ENCODE measurements at regions of chrX and their contacts with region 1.

Region 1: DNA sequence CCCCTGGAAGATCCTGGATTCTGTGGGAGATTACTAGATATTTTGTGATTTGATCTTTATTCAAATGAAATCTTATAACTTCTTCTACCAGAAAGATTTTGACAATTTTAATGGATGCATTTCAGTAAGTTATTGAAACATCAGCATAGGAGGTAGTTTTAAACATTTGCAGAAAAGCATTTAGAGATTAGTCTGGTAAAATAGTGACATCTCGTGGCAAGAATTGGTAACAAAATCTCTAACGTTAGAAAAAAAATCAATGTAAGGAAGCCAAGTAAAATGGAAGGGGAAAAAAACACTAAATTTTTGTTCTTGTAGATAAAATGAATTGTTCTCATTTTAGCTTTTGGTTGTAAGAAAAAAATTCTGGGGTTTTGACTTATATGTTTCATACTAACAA is 73.3 kb downstream of the TASL start:
- DNase-seq: peak; percentile 46
- H3K4me3 ChIP-seq: no peak overlapping the region
- H3K27ac ChIP-seq: no peak overlapping the region
- H3K4me1 ChIP-seq: no peaks in the 10 kb centered on the region
- H3K27me3 ChIP-seq: peaks cover 0 to 3% of the 10 kb centered on the region in 2 experiments
- CTCF ChIP-seq: peak in 1 of 2 donors; percentile 8
- POLR2A ChIP-seq: no peak

Region 2: GRCh38 chrX:30275498-30275897 is 228.8 kb before region 1 on chrX:
- CTCF ChIA-PET with region 1: interaction called, 21 read pairs
- POLR2A ChIA-PET with region 1: no interaction called
- dilution Hi-C with region 1: no loop called
- intact Hi-C with region 1: loop called (anchors 1 kb)
- DNase-seq: peak; percentile 1
- H3K4me3 ChIP-seq: no peak overlapping the region
- H3K27ac ChIP-seq: no peak overlapping the region
- H3K4me1 ChIP-seq: no peaks in the 10 kb centered on the region
- H3K27me3 ChIP-seq: no peaks in the 10 kb centered on the region
- CTCF ChIP-seq: no peak
- POLR2A ChIP-seq: no peak

Region 3: DNA sequence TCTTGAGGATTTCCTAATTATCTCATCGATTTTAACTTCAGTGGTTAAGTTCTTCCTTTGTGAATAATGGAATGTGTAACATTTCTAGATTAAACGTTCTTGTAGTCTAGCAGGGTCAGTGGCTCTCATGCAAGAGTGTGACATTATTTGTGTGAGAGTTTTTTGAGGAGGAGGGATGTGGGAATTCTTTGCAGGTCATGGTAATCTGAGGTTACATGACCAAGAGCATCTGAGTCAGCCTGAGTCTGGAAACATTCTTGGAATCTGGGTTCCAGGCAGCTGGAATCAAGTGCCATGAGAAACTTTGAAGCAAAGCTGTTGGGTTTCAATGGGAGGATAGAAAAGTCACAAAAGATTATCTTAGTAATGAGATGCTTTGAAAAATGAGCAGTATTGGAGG is 198.4 kb after region 1 on chrX:
- CTCF ChIA-PET with region 1: no interaction called
- POLR2A ChIA-PET with region 1: no interaction called
- dilution Hi-C with region 1: no loop called
- intact Hi-C with region 1: no loop called
- DNase-seq: no peak
- H3K4me3 ChIP-seq: no peak overlapping the region
- H3K27ac ChIP-seq: no peak overlapping the region
- H3K4me1 ChIP-seq: no peaks in the 10 kb centered on the region
- H3K27me3 ChIP-seq: no peaks in the 10 kb centered on the region
- CTCF ChIP-seq: no peak
- POLR2A ChIP-seq: no peak

Measured in endothelial cell of umbilical vein (primary cell).